PC-3 (cell line): ENCODE measurements at regions of chr10 and their contacts with region 1.

Region 1: DNA sequence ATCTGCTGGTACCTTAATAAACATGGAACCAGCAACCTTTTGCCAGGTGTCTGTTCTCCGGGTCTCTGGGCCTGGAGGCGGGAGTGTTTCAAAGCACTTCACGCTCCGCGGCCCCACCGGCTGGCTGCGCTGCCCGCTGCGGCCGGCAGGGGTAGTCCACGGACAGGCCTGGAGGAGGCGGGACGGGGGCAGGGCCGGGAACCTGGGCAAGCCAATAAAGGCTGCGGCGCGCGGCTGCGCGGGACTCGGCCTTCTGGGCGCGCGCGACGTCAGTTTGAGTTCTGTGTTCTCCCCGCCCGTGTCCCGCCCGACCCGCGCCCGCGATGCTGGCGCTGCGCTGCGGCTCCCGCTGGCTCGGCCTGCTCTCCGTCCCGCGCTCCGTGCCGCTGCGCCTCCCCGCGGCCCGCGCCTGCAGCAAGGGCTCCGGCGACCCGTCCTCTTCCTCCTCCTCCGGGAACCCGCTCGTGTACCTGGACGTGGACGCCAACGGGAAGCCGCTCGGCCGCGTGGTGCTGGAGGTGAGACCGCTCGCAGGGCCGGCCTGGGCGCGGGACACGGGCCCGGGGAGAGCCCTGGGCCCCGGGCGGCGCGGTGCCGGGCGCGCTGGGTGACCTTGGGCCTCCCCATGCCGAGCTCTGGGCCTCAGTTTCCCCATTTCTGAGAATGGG is at the start of gene PPIF:
- DNase-seq: peak; percentile 100
- ATAC-seq: peak; percentile 90
- H3K4me3 ChIP-seq: peak within 1 kb of the TSS; percentile 69
- H3K27ac ChIP-seq: peak within 1 kb of the TSS; percentile 69
- H3K4me1 ChIP-seq: peaks cover 37% of the 10 kb centered on the region
- H3K27me3 ChIP-seq: no peaks in the 10 kb centered on the region
- CTCF ChIP-seq: peak; percentile 100
- total RNA-seq, gene PPIF: 381 and 472 TPM in 2 replicates

Region 2: GRCh38 chr10:79242620-79243152 is 104.7 kb before region 1 on chr10:
- CTCF ChIA-PET with region 1: no interaction called
- POLR2A ChIA-PET with region 1: no interaction called
- intact Hi-C with region 1: loop called (anchors 1 kb)
- DNase-seq: peak; percentile 99
- ATAC-seq: peak; percentile 83
- H3K4me3 ChIP-seq: peak overlapping the region; percentile 70
- H3K27ac ChIP-seq: no peak overlapping the region; the same call in 1 of the 2 replicates
- H3K4me1 ChIP-seq: peaks cover 21% of the 10 kb centered on the region
- H3K27me3 ChIP-seq: no peaks in the 10 kb centered on the region
- CTCF ChIP-seq: no peak

Region 3: DNA sequence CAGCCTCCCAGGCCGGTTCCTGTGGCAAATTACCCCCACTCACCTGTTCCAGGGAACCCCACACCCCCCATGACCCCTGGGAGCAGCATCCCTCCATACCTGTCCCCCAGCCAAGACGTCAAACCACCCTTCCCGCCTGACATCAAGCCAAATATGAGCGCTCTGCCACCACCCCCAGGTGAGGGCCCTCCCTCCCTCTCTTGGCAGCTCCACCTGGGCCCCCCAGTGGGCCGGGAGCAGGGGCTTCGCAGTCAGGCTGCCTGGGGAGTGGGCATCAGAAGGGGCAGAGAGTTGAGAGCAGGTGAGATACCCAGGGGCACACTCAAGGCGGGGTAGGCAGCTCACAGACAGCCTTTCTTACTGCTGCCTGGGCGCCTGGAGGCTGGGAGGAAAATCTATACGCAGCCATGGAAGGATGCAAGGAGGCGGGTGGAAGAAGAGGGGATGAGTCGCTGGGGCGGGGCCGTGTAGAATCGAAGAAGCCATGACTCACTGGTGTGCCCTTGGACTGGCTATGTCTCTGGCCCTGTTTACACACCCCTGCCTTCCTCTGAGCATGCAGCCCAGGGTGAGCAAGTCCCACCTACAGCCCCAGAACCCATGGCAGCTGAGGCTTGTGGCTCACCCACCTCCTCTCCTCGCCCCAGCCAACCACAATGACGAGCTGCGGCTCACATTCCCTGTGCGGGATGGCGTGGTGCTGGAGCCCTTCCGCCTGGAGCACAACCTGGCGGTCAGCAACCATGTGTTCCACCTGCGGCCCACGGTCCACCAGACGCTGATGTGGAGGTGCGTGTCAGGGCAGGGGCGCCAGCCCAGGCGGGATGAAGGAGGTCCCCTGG is 48.7 kb before region 1 on chr10:
- CTCF ChIA-PET with region 1: interaction called, 3 read pairs
- POLR2A ChIA-PET with region 1: no interaction called
- intact Hi-C with region 1: loop called (anchors 1 kb)
- DNase-seq: peak; percentile 100
- ATAC-seq: peak; percentile 93
- H3K4me3 ChIP-seq: no peak overlapping the region
- H3K27ac ChIP-seq: peak overlapping the region; percentile 56
- H3K4me1 ChIP-seq: peaks cover 44% of the 10 kb centered on the region
- H3K27me3 ChIP-seq: no peaks in the 10 kb centered on the region
- CTCF ChIP-seq: no peak

Region 4: DNA sequence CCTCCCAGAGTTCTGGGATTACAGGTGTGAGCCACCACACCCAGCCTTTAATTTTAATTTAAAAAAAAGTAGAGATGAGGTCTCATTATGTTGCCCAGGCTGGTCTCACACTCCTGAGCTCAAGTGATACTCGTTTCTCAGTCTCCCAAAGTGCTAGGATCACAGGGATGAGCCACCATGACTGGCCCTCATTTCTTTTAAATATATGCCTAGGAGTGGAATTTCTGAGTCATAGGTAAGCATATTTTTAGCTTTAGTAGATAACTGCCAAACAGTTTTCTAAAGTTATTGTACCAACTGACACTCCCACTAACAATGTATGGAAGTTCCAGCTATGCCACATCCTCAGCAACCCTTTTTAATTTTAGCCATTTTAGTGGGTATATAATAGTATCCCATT is 13.9 kb before region 1 on chr10:
- CTCF ChIA-PET with region 1: interaction called, 3 read pairs
- POLR2A ChIA-PET with region 1: interaction called, 3 read pairs
- intact Hi-C with region 1: loop called (anchors 1 kb)
- DNase-seq: peak; percentile 100
- ATAC-seq: peak; percentile 49
- H3K4me3 ChIP-seq: no peak overlapping the region
- H3K27ac ChIP-seq: peak overlapping the region; percentile 68
- H3K4me1 ChIP-seq: peaks cover 57% of the 10 kb centered on the region
- H3K27me3 ChIP-seq: no peaks in the 10 kb centered on the region
- CTCF ChIP-seq: no peak

Region 5: DNA sequence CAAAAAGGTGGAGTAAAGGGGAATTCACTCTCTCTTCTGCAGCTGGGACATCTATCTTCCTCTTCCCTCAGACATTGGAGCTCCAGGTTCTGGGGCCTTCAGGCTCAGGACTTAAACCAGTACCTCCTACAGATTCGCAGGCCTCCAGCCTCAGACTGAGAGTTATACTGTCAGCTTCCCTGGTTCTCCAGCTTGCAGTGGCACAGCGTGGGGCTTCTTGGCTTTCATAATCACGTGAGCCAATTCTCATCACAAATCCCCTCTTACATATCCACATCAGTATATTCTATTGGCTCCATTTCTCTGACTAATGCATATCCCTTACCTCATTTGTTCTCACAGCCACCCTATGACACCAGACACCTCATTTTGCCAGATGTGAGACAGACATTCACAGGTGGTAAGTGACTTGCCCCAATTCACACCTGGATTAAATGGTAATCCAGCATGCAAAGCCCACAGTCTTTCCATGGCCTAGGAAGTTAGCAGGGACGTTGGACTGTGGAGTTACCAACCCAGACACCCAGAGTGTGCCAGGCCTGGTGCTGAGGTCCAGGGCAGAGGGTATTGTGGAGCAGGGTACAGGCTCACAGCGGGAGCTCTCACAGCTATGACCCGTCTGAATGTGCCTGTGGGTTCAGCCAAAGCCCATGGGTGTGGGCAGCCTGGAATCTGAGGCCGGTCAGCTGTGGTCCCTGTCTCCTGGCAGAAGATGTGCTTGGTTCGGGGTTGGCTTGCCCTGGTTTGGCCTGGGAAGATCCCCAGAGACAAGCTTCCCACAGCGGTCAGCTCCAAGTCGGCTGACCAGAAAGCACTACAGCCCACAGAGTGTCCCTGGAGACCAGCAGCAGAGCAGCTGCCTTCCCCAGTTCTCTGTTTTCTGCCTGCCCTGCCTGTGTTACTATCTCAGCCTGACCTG is 116.5 kb after region 1 on chr10:
- CTCF ChIA-PET with region 1: interaction called, 10 read pairs
- POLR2A ChIA-PET with region 1: no interaction called
- intact Hi-C with region 1: no loop called
- DNase-seq: no peak
- ATAC-seq: no peak
- H3K4me3 ChIP-seq: no peak overlapping the region
- H3K27ac ChIP-seq: no peak overlapping the region
- H3K4me1 ChIP-seq: no peaks in the 10 kb centered on the region
- H3K27me3 ChIP-seq: no peaks in the 10 kb centered on the region
- CTCF ChIP-seq: no peak